ENCODE measurements at regions of chr17 and their contacts with region 1.

Region 1: GRCh38 chr17:10646392-10646990 is 10.6 kb downstream of the MYH3 start:
- DNase-seq: peak; percentile 80
- ATAC-seq: peak; percentile 63
- H3K4me3 Mint-ChIP-seq: no peak overlapping the region
- H3K27ac Mint-ChIP-seq: no peak overlapping the region
- H3K4me1 Mint-ChIP-seq: no peaks in the 10 kb centered on the region
- H3K27me3 Mint-ChIP-seq: no peaks in the 10 kb centered on the region

Region 2: DNA sequence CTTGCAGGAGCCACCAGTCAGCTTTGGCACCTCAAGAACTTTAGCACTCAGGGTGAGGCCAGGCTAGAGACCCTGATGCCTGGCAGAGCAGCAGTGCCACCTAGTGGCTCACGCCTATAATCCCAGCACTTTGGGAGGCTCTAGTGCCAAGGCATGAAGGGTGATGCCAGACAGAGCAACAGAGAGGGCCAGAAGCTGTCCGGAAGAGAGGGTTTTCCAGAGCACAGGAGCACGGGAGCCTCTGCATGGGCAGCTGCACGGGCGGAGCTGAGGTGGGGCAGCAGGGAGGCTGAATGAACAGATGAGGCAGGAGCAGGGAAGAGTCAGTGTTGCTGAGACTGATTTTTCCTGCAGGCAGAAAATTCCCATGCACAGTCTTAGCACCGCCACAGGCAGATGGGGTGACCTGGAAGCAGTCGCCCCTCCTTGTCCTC is 28.3 kb before region 1 on chr17:
- CTCF ChIA-PET with region 1: interaction called, 18 read pairs
- POLR2A ChIA-PET with region 1: no interaction called
- DNase-seq: peak; percentile 72
- ATAC-seq: peak; percentile 83
- H3K4me3 Mint-ChIP-seq: no peak overlapping the region
- H3K27ac Mint-ChIP-seq: no peak overlapping the region
- H3K4me1 Mint-ChIP-seq: no peaks in the 10 kb centered on the region
- H3K27me3 Mint-ChIP-seq: no peaks in the 10 kb centered on the region

Region 3: DNA sequence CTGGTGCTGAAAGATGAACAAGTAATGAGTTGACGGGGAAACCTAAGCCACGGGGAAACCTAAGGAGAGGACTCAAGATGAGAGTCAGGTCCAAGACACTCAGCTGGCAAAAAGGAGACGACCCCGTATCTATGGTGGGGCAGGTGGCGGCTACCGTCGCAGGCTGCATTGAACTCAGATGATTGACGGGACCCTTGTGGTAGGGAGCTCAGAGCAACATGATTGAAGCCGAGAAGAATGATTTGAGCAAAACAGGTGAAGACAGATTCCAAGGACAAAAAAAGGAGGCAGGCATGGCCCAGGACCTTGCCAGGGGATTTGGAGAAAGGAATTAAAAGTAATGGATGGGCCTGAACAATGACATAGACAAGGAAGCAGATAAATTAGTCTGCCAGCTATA is 18.1 kb after region 1 on chr17:
- CTCF ChIA-PET with region 1: interaction called, 13 read pairs
- POLR2A ChIA-PET with region 1: no interaction called
- DNase-seq: no peak
- ATAC-seq: no peak
- H3K4me3 Mint-ChIP-seq: no peak overlapping the region
- H3K27ac Mint-ChIP-seq: no peak overlapping the region
- H3K4me1 Mint-ChIP-seq: no peaks in the 10 kb centered on the region
- H3K27me3 Mint-ChIP-seq: no peaks in the 10 kb centered on the region

Region 4: DNA sequence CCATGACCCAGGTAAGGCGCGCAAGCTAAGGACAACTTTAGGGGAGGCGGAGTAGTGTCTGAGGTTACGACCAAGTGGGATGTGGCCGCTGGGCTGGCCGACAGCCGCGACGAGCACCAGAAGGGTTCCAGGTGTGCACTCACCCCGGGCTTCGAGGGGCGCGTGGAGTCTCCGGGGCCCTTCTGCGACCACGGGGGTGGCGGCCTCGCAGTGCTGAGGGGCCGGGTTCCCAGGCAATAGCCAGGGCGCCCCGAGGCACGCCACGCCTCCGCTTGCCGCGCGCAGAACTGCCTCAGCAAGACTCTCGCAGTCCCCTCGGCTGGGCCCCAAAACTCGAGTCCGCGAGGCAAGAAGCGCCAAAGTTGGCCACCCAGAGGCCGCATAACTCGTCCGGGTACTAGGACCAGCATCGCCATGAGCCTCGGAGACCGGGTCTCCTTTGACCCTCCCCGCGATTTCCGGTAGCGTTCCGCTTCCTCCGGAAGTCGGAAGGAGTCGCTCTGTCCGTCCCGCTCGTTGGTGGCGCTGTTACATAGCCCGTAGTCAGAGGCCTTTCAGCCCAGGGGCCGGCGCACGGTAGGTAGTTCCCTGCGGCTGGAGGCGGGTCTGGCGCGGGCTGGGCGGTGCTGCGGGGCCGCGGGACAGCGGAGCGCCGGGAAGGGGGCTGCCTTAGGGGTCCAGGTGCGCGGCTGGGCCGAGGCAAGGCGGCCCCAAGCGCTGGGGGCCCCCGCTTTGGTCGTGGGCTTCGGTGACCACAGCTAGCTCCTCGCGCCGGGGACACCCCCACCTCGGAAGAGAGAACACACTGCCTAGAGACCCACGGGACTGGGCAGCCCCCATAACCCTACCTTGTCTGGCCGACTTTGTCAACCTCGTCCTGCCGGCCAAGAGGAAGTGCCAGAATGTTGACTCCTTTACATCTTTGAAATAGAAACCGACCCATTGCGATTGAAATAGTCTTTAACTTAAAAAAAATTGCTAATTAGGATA is 50.9 kb after region 1 on chr17 and contains the starts of genes ADPRM and SCO1:
- CTCF ChIA-PET with region 1: interaction called, 21 read pairs
- POLR2A ChIA-PET with region 1: no interaction called
- DNase-seq: peak; percentile 94
- ATAC-seq: peak; percentile 97
- H3K4me3 Mint-ChIP-seq: peak within 1 kb of the TSS; percentile 97
- H3K27ac Mint-ChIP-seq: peak within 1 kb of the TSS; percentile 97
- H3K4me1 Mint-ChIP-seq: peaks cover 60% of the 10 kb centered on the region
- H3K27me3 Mint-ChIP-seq: no peaks in the 10 kb centered on the region
- total RNA-seq, gene ADPRM: 10.3 to 10.4 TPM
- total RNA-seq, gene SCO1: 25.8 to 28.0 TPM

Region 5: DNA sequence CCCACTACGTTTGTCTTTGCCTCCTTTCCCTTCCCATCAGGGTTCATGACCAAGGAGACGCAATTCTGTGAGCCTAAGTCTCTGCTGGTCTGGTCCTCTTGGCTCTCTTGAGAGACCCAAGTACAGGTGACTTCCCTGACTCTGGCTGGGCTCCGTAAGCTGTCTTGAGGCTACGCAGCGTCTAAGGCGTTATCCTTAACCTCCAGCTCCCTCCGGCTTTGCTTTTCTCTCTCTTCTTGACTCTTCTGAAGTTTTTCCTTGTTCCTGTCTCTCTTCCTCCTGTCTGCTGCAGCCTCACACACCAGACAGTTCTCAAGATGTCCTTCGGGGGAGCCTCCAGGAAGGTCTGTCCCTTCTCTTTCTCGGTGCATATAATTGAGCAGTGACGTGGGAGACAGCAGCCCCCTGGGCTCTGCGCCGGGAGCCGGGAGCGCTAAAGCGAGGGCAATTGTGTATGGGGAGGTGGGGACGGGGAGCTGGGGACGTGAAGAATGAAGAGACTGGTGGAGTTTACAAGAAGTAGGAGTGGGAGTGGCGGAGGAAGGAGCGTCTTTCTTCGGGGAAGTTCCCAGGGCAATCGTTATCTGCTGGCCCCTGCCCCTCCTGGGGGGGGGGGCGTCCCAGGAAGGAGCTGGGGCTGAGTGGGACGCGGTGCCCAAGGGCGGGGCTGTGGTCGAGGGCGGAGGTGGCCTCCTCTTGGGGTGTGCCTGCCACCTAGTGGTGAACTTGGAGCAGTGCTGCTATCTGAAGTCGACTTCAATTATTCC is 198.3 kb after region 1 on chr17:
- CTCF ChIA-PET with region 1: interaction called, 76 read pairs
- POLR2A ChIA-PET with region 1: no interaction called
- DNase-seq: peak; percentile 77
- ATAC-seq: peak; percentile 97
- H3K4me3 Mint-ChIP-seq: peak overlapping the region; percentile 75
- H3K27ac Mint-ChIP-seq: peak overlapping the region; percentile 8
- H3K4me1 Mint-ChIP-seq: peaks cover 6% of the 10 kb centered on the region
- H3K27me3 Mint-ChIP-seq: peaks cover 6% of the 10 kb centered on the region